Transverse colon (tissue), 4 donors: ENCODE measurements at regions of chr17 and their contacts with region 1.

Region 1: GRCh38 chr17:75764711-75765421 is at the start of gene GALK1:
- DNase-seq: peak; percentile 82
- H3K4me3 ChIP-seq: peak within 1 kb of the TSS; percentile 52 to 67 (median 58)
- H3K27ac ChIP-seq: peak within 1 kb of the TSS; percentile 85 to 89 (median 88)
- H3K4me1 ChIP-seq: peaks cover 6 to 24% (median 17%) of the 10 kb centered on the region in 4 donors
- H3K27me3 ChIP-seq: no peaks in the 10 kb centered on the region
- CTCF ChIP-seq: peak in 3 of 5 experiments; percentile 51 to 71 (median 59)
- EP300 ChIP-seq: no peak
- POLR2A ChIP-seq: peak; percentile 55
- total RNA-seq, gene GALK1: 9.3 to 116 (median 30.9) TPM

Region 2: GRCh38 chr17:74430706-74431567 is 1333.9 kb before region 1 on chr17:
- in situ Hi-C with region 1: no loop called
- intact Hi-C with region 1: loop called (anchors 10 kb)
- DNase-seq: peak; percentile 84
- H3K4me3 ChIP-seq: peak overlapping the region; percentile 58 to 77 (median 63)
- H3K27ac ChIP-seq: peak overlapping the region; percentile 92 to 96 (median 95)
- H3K4me1 ChIP-seq: peaks cover 18 to 82% (median 59%) of the 10 kb centered on the region in 4 donors
- H3K27me3 ChIP-seq: no peaks in the 10 kb centered on the region
- CTCF ChIP-seq: no peak
- EP300 ChIP-seq: no peak
- POLR2A ChIP-seq: peak; percentile 88

Region 3: DNA sequence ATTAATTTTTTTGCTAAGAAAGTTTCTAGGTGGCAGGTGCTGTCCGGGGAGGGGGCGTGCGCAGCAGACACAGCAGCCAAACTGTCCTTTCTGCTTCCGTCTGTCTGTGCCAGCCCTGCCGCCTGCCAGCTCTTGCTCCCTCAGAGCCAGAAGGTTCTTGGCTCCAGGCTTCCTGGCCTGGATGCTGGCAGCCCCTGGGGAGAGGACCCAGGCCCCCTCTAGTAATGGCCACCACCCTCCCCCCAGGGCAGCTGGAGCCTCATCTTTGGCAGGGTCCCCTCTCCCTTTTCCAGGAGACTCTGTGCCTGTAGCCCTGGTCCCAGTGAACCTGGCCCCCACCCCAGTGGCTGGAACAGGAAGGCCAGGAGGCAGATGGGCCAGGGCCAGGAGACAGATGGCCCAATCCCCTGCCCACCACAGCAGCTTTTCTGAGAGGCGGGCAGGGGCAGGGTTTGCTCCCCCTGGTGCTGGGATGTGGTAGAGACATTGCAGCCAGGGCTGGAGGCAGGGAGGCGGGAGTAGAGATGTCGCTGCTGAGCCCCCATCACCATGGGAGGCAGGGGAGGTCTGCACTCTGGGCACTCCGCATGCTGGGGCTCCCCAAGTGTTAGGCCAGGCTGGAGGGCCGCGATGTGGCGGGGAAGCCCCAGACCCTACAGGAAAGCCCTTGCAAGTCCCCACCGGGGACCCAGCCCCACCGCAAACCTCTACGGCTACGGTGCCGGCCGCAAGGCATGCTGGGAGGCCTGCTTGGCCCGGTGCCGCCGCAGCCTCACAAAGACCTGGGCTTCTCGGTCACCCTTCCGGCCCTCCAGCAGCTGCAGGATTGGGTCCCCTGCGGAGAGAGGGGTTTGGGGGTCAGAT is 62.6 kb after region 1 on chr17:
- in situ Hi-C with region 1: no loop called
- intact Hi-C with region 1: no loop called
- DNase-seq: peak; percentile 65
- H3K4me3 ChIP-seq: peak overlapping the region in 2 of 4 donors; percentile 32
- H3K27ac ChIP-seq: peak overlapping the region; percentile 55 to 86 (median 76)
- H3K4me1 ChIP-seq: peaks cover 12 to 22% (median 15%) of the 10 kb centered on the region in 4 donors
- H3K27me3 ChIP-seq: no peaks in the 10 kb centered on the region
- CTCF ChIP-seq: peak; percentile 67 to 81 (median 71)
- EP300 ChIP-seq: no peak
- POLR2A ChIP-seq: no peak

Region 4: GRCh38 chr17:75896415-75897159 is 131.7 kb after region 1 on chr17 and contains the start of gene TRIM65:
- in situ Hi-C with region 1: loop called in 1 of 4 experiments (anchors 25 kb)
- intact Hi-C with region 1: no loop called
- DNase-seq: peak; percentile 88
- H3K4me3 ChIP-seq: peak within 1 kb of the TSS; percentile 70 to 96 (median 84)
- H3K27ac ChIP-seq: peak within 1 kb of the TSS; percentile 90 to 98 (median 97)
- H3K4me1 ChIP-seq: peaks cover 21 to 26% (median 24%) of the 10 kb centered on the region in 4 donors
- H3K27me3 ChIP-seq: no peaks in the 10 kb centered on the region
- CTCF ChIP-seq: peak in 3 of 5 experiments; percentile 5 to 33 (median 29)
- EP300 ChIP-seq: no peak
- POLR2A ChIP-seq: peak; percentile 76
- total RNA-seq, gene TRIM65: 16.8 to 21.7 (median 20.5) TPM